ENCODE measurements at regions of chr19 and their contacts with region 1.

Region 1: GRCh38 chr19:35636651-35637050 is 4.9 kb upstream of the ETV2 start:
- DNase-seq: no peak
- H3K4me3 ChIP-seq: no peak overlapping the region
- H3K27ac ChIP-seq: no peak overlapping the region
- H3K4me1 ChIP-seq: peaks cover 4 to 12% (median 7%) of the 10 kb centered on the region in 4 experiments
- H3K27me3 ChIP-seq: no peaks in the 10 kb centered on the region
- CTCF ChIP-seq: no peak
- EP300 ChIP-seq: no peak
- POLR2A ChIP-seq: no peak
- RAD21 ChIP-seq: no peak

Region 2: GRCh38 chr19:35648017-35648961 is 11.6 kb after region 1 on chr19 and contains the start of gene COX6B1:
- CTCF ChIA-PET with region 1: no interaction called
- POLR2A ChIA-PET with region 1: interaction called, 17 read pairs
- DNase-seq: peak; percentile 84 to 88
- H3K4me3 ChIP-seq: peak within 1 kb of the TSS; percentile 62 to 98 (median 92)
- H3K27ac ChIP-seq: peak within 1 kb of the TSS; percentile 44; the same call in 1 of the 2 replicates
- H3K4me1 ChIP-seq: peaks cover 2 to 11% (median 4%) of the 10 kb centered on the region in 4 experiments; a peak in 5 of 7 replicates
- H3K27me3 ChIP-seq: no peaks in the 10 kb centered on the region; a peak in 3 of 7 replicates
- CTCF ChIP-seq: no peak
- EP300 ChIP-seq: no peak
- POLR2A ChIP-seq: peak; percentile 49 to 83
- RAD21 ChIP-seq: no peak
- total RNA-seq, gene COX6B1: 436 and 437 TPM in 2 replicates